Activated T-helper 2 cell treated with anti-CD3 and anti-CD28 coated beads, Interferon-gamma antibody, Interleukin-2, Interleukin-4, amounts not matched to agents 10 μg/mL and 5 μg/mL and 100 μg/mL, durations not matched to agents 14 hours and 24 hours and 36 hours (primary cell): ENCODE measurements at regions of chr6 and their contacts with region 1.

Region 1: GRCh38 chr6:161228921-161229591 is 44.8 kb downstream of the AGPAT4 start:
- DNase-seq: no peak
- H3K4me3 Mint-ChIP-seq: peak overlapping the region; percentile 7
- H3K27ac Mint-ChIP-seq: peak overlapping the region; percentile 69
- H3K4me1 Mint-ChIP-seq: peaks cover 50% of the 10 kb centered on the region
- H3K27me3 Mint-ChIP-seq: no peaks in the 10 kb centered on the region

Region 2: DNA sequence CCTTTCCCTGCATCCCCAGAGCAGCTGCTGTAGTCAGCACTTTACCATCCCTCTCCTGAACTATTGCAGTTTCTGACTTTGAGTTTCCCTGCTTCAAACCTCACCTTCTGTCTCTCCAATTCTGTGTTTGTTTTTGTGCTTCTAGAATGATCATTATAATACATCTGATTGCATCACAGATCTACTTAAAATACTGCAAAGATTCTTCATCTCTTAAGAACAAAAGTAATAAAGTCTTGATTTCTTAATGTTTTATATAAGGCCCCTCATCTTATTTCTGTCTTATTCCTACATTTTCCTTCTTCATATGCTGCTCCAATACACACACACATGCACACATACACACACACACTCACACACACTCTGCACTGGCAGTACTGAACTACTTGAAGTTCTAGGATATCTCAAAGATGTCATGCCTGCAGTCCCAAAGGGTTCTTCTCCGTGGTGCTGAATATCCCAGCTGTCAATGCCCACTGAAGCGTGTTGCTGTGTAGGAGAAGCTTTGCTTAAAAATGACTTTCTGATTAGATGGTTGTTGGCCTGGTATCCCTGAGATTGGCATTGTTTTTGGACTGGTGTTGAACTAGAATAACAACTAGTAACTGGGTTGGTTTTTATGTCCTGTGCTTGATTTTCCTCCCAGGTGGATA is 140.3 kb before region 1 on chr6:
- intact Hi-C with region 1: loop called (anchors 5 kb)
- DNase-seq: no peak
- H3K4me3 Mint-ChIP-seq: no peak overlapping the region
- H3K27ac Mint-ChIP-seq: no peak overlapping the region
- H3K4me1 Mint-ChIP-seq: peaks cover 16% of the 10 kb centered on the region
- H3K27me3 Mint-ChIP-seq: no peaks in the 10 kb centered on the region

Region 3: DNA sequence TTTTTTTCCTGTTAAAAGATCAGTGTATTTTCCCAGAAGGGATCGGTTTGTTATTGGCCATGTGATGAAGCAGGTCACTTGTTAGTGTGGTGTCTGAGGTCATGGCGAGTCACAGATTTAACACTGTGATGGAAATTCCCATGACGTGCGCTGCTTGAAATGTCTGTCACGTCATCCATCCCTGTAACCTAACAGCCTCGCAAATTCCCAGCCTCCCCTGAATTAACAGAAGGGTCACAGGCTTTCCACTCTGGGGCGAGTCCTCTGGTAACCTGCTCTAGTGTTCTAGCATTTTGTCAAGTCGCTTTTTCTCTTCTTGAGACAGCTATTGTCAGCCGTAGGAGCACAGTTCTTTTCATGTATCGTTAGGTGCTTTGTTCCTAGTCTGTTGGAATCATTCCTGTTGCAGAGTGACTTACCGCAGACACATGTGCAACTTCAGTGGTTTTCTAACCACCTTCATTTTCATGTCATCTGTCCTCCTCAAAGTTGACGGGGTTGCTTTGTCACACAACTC is 100.3 kb before region 1 on chr6:
- intact Hi-C with region 1: loop called (anchors 5 kb)
- DNase-seq: no peak
- H3K4me3 Mint-ChIP-seq: peak overlapping the region; percentile 15
- H3K27ac Mint-ChIP-seq: peak overlapping the region; percentile 93
- H3K4me1 Mint-ChIP-seq: peaks cover 20% of the 10 kb centered on the region
- H3K27me3 Mint-ChIP-seq: no peaks in the 10 kb centered on the region